ENCODE measurements at regions of chr14 and their contacts with region 1.

Region 1: GRCh38 chr14:73209953-73210352 is 27.4 kb upstream of the PAPLN start:
- DNase-seq: peak; percentile 96
- ATAC-seq: peak; percentile 99
- H3K4me3 ChIP-seq: peak overlapping the region; percentile 15; the same call in 1 of the 2 replicates
- H3K27ac ChIP-seq: peak overlapping the region; percentile 86
- H3K4me1 ChIP-seq: peaks cover 28% of the 10 kb centered on the region
- H3K27me3 ChIP-seq: no peaks in the 10 kb centered on the region
- CTCF ChIP-seq: no peak

Region 2: DNA sequence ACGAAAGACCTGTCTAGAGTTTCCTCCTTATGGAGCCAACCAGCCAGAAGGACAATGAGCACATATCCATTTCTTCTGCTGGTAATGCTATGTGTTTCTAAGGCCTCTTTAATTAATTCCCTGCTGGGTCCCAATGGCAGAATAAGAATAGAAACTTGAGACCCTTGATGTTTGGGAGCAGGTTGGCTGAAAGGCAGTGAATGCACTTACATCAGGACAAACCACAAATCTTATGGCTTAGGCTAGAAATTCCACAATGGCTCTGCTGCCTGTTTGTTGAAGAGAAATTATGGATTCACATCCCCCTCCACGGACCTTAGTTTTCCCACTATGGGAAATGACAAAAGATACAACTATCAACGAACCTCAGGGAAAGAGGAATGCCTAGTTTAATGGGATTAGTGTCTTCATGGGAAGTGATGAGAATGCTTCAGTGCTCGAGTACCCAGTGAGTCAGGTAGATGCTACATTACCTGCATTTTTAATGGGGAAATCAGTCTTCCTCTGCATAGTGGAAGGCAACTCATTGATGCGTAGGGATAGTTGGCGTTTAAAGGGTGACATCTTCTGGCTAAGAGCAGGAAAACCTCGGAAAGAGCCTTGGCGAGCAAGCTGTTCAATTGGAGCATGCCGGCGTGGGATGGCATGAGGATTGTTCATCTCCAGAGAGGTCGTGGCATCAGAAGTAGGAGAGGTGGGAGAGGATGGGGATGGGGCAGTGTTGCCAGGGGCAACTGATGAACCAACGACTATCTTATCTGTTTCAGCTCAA is 73.8 kb after region 1 on chr14:
- CTCF ChIA-PET with region 1: interaction called, 5 read pairs
- POLR2A ChIA-PET with region 1: interaction called, 6 read pairs
- intact Hi-C with region 1: loop called (anchors 1 kb)
- DNase-seq: peak; percentile 75
- ATAC-seq: peak; percentile 76
- H3K4me3 ChIP-seq: no peak overlapping the region
- H3K27ac ChIP-seq: no peak overlapping the region
- H3K4me1 ChIP-seq: peaks cover 9% of the 10 kb centered on the region; the same call in 1 of the 2 replicates
- H3K27me3 ChIP-seq: no peaks in the 10 kb centered on the region
- CTCF ChIP-seq: peak; percentile 86

Region 3: GRCh38 chr14:75113932-75114539 is 1904.1 kb after region 1 on chr14:
- CTCF ChIA-PET with region 1: no interaction called
- POLR2A ChIA-PET with region 1: no interaction called
- intact Hi-C with region 1: no loop called
- DNase-seq: no peak
- ATAC-seq: no peak
- H3K4me3 ChIP-seq: no peak overlapping the region
- H3K27ac ChIP-seq: no peak overlapping the region
- H3K4me1 ChIP-seq: no peaks in the 10 kb centered on the region
- H3K27me3 ChIP-seq: no peaks in the 10 kb centered on the region
- CTCF ChIP-seq: no peak

Measured in PC-3 (cell line).